Activated T-helper 2 cell treated with anti-CD3 and anti-CD28 coated beads, Interferon-gamma antibody, Interleukin-2, Interleukin-4, amounts not matched to agents 10 μg/mL and 5 μg/mL and 100 μg/mL, durations not matched to agents 14 hours and 24 hours and 36 hours (primary cell): ENCODE measurements at regions of chr16 and their contacts with region 1.

Region 1: GRCh38 chr16:68289621-68290329 is 21.0 kb downstream of the SLC7A6OS start:
- DNase-seq: peak; percentile 57
- H3K4me3 Mint-ChIP-seq: peak overlapping the region; percentile 45
- H3K27ac Mint-ChIP-seq: peak overlapping the region; percentile 94
- H3K4me1 Mint-ChIP-seq: peaks cover 72% of the 10 kb centered on the region
- H3K27me3 Mint-ChIP-seq: no peaks in the 10 kb centered on the region

Region 2: DNA sequence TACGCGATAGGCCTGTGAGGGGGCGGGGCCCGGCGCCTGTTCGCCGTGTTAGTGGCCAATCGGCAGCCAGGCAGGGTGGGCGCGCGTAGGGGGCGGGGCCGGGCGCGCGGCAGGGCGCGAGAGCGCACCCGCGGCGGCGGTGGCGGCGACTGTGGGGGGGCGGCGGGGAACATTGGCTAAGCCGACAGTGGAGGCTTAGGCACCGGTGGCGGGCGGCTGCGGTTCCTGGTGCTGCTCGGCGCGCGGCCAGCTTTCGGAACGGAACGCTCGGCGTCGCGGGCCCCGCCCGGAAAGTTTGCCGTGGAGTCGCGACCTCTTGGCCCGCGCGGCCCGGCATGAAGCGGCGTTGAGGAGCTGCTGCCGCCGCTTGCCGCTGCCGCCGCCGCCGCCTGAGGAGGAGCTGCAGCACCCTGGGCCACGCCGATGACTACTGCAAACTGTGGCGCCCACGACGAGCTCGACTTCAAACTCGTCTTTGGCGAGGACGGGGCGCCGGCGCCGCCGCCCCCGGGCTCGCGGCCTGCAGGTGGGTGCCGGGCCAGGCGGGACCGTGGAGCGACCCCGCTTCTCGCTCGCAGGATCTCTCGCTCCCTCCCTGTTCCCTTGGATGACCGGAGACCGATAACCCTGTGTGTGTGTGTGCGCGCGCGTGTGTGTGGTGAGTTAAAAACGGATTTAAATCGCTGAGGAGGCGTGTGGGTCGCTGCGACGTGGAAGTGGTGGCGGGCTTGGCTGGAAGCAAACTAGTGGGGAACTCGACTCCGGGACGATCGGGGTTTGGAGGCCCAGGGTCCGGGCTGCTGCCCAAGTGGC is 204.3 kb before region 1 on chr16 and contains the start of gene NFATC3:
- intact Hi-C with region 1: loop called (anchors 10 kb)
- DNase-seq: peak; percentile 97
- H3K4me3 Mint-ChIP-seq: peak within 1 kb of the TSS; percentile 89
- H3K27ac Mint-ChIP-seq: peak within 1 kb of the TSS; percentile 95
- H3K4me1 Mint-ChIP-seq: peaks cover 52% of the 10 kb centered on the region
- H3K27me3 Mint-ChIP-seq: no peaks in the 10 kb centered on the region
- total RNA-seq, gene NFATC3: 136 and 146 TPM in 2 replicates

Region 3: GRCh38 chr16:68200088-68200783 is 89.5 kb before region 1 on chr16:
- intact Hi-C with region 1: no loop called
- DNase-seq: no peak
- H3K4me3 Mint-ChIP-seq: no peak overlapping the region
- H3K27ac Mint-ChIP-seq: peak overlapping the region; percentile 62
- H3K4me1 Mint-ChIP-seq: peaks cover 15% of the 10 kb centered on the region
- H3K27me3 Mint-ChIP-seq: no peaks in the 10 kb centered on the region

Region 4: DNA sequence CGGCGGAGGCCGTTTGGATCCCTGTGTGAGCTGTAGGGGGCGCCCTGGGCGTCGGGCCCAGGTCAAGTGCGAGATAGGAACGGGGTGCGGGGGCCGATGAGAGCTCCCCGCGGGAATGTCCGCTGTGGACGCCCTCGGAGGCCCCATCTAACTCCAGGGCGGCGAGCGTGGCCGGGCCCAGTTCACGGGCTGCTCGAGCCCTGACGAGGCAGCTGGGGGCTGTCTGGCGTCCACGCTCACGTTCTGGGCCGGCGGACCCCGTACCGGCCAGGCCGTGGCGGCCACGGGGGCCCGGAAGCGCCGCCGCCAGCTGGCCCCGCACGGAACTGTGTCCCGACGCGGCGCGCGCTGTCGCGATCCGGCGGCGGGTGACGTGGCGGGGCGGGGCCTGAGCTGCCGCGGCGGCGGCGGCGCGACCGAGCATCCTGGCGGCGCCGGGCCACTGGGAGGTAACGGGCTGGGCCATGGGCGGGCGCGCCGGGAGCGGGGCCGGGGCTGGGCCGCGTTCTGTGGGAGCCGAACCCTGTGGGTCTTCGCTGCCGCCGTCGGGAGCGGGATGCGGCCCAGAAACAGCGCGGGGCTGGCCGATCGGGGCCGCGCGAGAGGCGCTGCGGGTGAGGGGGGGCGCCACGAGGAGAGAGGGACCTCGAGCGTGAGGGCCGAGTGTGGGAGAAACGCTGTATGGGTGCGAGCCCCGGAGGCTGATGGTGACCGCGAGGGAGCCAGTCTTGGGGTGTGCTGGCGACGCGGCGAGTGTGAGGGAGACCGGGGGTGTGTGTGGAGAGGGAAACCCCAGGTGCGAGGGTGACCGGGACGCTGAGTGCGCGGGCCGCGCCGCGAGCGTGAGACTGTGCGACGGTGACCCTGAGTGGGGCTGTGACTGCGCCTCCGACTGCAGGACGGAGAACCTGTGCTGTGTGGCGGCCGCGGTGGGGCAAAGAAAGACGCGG is 25.4 kb before region 1 on chr16 and contains the start of gene SLC7A6:
- intact Hi-C with region 1: loop called (anchors 1 kb)
- DNase-seq: peak; percentile 79
- H3K4me3 Mint-ChIP-seq: peak within 1 kb of the TSS; percentile 93
- H3K27ac Mint-ChIP-seq: peak within 1 kb of the TSS; percentile 97
- H3K4me1 Mint-ChIP-seq: peaks cover 36% of the 10 kb centered on the region
- H3K27me3 Mint-ChIP-seq: no peaks in the 10 kb centered on the region
- total RNA-seq, gene SLC7A6: 107 and 108 TPM in 2 replicates

Region 5: DNA sequence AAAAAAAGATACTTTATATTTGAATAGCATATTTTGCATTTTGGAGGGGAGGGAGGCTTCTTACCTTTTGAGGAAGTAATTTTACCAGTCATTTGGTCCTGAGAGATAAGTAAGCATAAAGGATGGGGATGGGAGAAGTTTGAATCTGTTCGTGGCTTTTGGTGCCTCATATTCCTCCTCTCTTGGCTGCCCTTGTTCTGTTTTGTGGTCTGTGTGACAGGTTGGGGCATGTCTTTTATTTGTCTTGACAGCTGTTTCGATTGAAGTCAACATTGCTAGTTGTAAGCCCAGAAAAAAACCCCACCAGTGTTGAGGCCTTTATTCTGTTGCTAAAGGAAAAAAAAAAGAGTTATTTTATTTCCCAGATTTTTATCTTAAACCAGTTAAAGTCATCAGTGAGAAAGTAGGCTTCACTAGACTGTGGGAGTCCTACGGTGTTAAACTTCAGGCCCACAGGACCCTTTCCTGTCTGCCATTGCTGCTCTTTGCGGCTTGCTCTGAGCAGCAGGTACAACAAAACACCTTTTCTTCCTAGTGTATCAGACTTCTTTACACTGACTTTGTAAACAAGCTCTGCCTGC is 14.1 kb before region 1 on chr16:
- intact Hi-C with region 1: loop called (anchors 1 kb)
- DNase-seq: peak; percentile 31
- H3K4me3 Mint-ChIP-seq: peak overlapping the region; percentile 44
- H3K27ac Mint-ChIP-seq: peak overlapping the region; percentile 76
- H3K4me1 Mint-ChIP-seq: peaks cover 51% of the 10 kb centered on the region
- H3K27me3 Mint-ChIP-seq: no peaks in the 10 kb centered on the region

Region 6: GRCh38 chr16:68328151-68328859 is 38.5 kb after region 1 on chr16:
- intact Hi-C with region 1: loop called (anchors 1 kb)
- DNase-seq: peak; percentile 73
- H3K4me3 Mint-ChIP-seq: no peak overlapping the region
- H3K27ac Mint-ChIP-seq: peak overlapping the region; percentile 62
- H3K4me1 Mint-ChIP-seq: peaks cover 32% of the 10 kb centered on the region
- H3K27me3 Mint-ChIP-seq: no peaks in the 10 kb centered on the region